ENCODE measurements at regions of chr5 and their contacts with region 1.

Region 1: GRCh38 chr5:41903892-41904799 is at the start of gene RIMOC1:
- DNase-seq: peak; percentile 94 to 98 (median 97)
- ATAC-seq: peak; percentile 94
- H3K4me3 ChIP-seq: peak within 1 kb of the TSS; percentile 90
- H3K4me3 Mint-ChIP-seq: peak within 1 kb of the TSS; percentile 84 to 99 (median 98)
- H3K27ac ChIP-seq: peak within 1 kb of the TSS; percentile 85
- H3K27ac Mint-ChIP-seq: peak within 1 kb of the TSS; percentile 97 to 100 (median 99)
- H3K4me1 ChIP-seq: peaks cover 16 to 18% of the 10 kb centered on the region in 2 donors
- H3K4me1 Mint-ChIP-seq: peaks cover 21 to 54% (median 46%) of the 10 kb centered on the region in 7 donors
- H3K27me3 ChIP-seq: no peaks in the 10 kb centered on the region
- H3K27me3 Mint-ChIP-seq: peaks cover 0 to 11% (median 0%) of the 10 kb centered on the region in 5 donors
- total RNA-seq, gene RIMOC1: 13.8 to 40.6 (median 27.5) TPM

Region 2: GRCh38 chr5:40755407-40756365 is 1148.5 kb before region 1 on chr5 and contains the start of gene TTC33:
- CTCF ChIA-PET with region 1: no interaction called
- POLR2A ChIA-PET with region 1: no interaction called
- intact Hi-C with region 1: loop called in 1 of 2 experiments (anchors 1 kb)
- DNase-seq: peak; percentile 84 to 95 (median 91)
- ATAC-seq: peak; percentile 95
- H3K4me3 ChIP-seq: peak within 1 kb of the TSS; percentile 95
- H3K4me3 Mint-ChIP-seq: no peak within 1 kb of the TSS
- H3K27ac ChIP-seq: peak within 1 kb of the TSS; percentile 89
- H3K27ac Mint-ChIP-seq: peak within 1 kb of the TSS in 1 of 9 donors; percentile 32
- H3K4me1 ChIP-seq: peaks cover 9 to 11% of the 10 kb centered on the region in 2 donors
- H3K4me1 Mint-ChIP-seq: peaks cover 0 to 34% (median 17%) of the 10 kb centered on the region in 7 donors
- H3K27me3 ChIP-seq: no peaks in the 10 kb centered on the region
- H3K27me3 Mint-ChIP-seq: no peaks in the 10 kb centered on the region
- total RNA-seq, gene TTC33: 7.0 to 17.2 (median 14.0) TPM

Region 3: DNA sequence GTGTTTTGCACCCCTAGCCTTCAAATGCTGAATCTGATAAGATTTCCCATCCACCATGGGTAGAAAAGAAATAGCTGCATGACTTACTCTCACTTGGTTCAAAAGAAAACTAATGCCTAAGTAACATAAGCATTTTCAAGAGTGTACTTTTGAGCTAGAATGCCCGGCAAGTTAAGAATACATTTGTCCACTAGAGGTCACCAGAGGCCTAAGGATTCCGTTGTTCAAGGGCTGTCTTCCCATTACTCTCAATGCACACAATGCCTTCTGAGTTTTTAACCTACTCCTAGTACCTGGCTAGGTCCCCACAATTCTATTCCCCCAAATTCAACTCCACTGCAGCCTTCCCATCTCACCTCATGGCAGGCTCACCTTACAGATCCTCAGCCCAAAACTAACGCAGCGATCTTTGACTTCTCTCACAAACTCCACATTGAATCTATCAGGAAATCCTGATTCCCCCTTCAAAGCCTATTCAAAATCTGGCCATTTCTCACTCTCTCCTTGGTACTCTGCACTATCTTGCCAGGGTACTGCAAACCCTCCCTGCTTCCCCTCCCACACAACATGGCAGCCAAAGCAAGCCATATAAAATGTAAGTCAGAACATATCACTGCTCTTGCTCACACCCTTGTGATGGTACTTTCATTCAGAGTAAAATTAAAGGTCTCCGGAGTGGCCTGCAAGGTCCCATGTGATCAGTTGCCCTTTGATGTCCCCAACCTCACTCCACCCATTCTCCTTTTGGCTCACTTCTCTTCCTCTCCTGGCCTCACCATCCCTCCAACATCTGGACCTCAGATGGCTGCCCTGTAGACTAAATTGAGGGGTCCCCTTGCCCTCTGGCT is 47.3 kb before region 1 on chr5:
- CTCF ChIA-PET with region 1: interaction called, 3 read pairs
- POLR2A ChIA-PET with region 1: no interaction called
- intact Hi-C with region 1: loop called (anchors 1 kb)
- DNase-seq: peak in 8 of 9 donors; percentile 34 to 77 (median 71)
- ATAC-seq: peak; percentile 93
- H3K4me3 ChIP-seq: no peak overlapping the region
- H3K4me3 Mint-ChIP-seq: no peak overlapping the region
- H3K27ac ChIP-seq: peak overlapping the region; percentile 1
- H3K27ac Mint-ChIP-seq: no peak overlapping the region
- H3K4me1 ChIP-seq: no peaks in the 10 kb centered on the region
- H3K4me1 Mint-ChIP-seq: peaks cover under 1 to 13% (median 7%) of the 10 kb centered on the region in 7 donors
- H3K27me3 ChIP-seq: no peaks in the 10 kb centered on the region
- H3K27me3 Mint-ChIP-seq: no peaks in the 10 kb centered on the region

Region 4: DNA sequence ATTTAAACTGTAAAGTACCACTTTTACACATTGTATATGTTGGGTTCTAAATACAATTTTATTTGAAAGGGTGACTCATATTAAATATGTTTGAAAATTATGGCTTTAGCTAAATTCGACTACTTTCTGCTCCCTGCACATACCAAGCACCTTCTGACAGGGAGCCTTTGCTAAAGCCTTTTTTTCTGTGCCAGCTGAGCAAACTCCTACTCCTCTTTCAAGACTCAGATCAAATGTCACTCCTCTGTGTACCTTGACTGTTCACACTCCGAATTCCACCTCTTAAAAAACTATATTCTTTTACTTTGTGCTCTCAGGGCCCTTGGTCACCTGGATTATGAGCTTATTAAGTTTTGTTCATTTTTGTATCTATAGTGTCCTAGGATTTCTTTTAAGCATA is 27.5 kb before region 1 on chr5:
- CTCF ChIA-PET with region 1: interaction called, 5 read pairs
- POLR2A ChIA-PET with region 1: interaction called, 62 read pairs
- intact Hi-C with region 1: no loop called
- DNase-seq: no peak
- ATAC-seq: no peak
- H3K4me3 ChIP-seq: no peak overlapping the region
- H3K4me3 Mint-ChIP-seq: no peak overlapping the region
- H3K27ac ChIP-seq: no peak overlapping the region
- H3K27ac Mint-ChIP-seq: no peak overlapping the region
- H3K4me1 ChIP-seq: no peaks in the 10 kb centered on the region
- H3K4me1 Mint-ChIP-seq: peaks cover 0 to 15% (median 8%) of the 10 kb centered on the region in 7 donors
- H3K27me3 ChIP-seq: no peaks in the 10 kb centered on the region
- H3K27me3 Mint-ChIP-seq: peaks cover 3 to 16% (median 8%) of the 10 kb centered on the region in 5 donors

Region 5: GRCh38 chr5:42950440-42951292 is 1046.5 kb after region 1 on chr5:
- CTCF ChIA-PET with region 1: no interaction called
- POLR2A ChIA-PET with region 1: interaction called, 3 read pairs
- intact Hi-C with region 1: loop called (anchors 1 to 5 kb)
- DNase-seq: peak in 8 of 9 donors; percentile 39 to 77 (median 51)
- ATAC-seq: peak; percentile 51
- H3K4me3 ChIP-seq: peak overlapping the region; percentile 80
- H3K4me3 Mint-ChIP-seq: peak overlapping the region; percentile 87 to 99 (median 97)
- H3K27ac ChIP-seq: peak overlapping the region; percentile 98
- H3K27ac Mint-ChIP-seq: peak overlapping the region; percentile 97 to 100 (median 99)
- H3K4me1 ChIP-seq: peaks cover 5 to 22% of the 10 kb centered on the region in 2 donors
- H3K4me1 Mint-ChIP-seq: peaks cover 13 to 51% (median 23%) of the 10 kb centered on the region in 7 donors
- H3K27me3 ChIP-seq: no peaks in the 10 kb centered on the region
- H3K27me3 Mint-ChIP-seq: peaks cover 0 to 9% (median 0%) of the 10 kb centered on the region in 5 donors

Region 6: DNA sequence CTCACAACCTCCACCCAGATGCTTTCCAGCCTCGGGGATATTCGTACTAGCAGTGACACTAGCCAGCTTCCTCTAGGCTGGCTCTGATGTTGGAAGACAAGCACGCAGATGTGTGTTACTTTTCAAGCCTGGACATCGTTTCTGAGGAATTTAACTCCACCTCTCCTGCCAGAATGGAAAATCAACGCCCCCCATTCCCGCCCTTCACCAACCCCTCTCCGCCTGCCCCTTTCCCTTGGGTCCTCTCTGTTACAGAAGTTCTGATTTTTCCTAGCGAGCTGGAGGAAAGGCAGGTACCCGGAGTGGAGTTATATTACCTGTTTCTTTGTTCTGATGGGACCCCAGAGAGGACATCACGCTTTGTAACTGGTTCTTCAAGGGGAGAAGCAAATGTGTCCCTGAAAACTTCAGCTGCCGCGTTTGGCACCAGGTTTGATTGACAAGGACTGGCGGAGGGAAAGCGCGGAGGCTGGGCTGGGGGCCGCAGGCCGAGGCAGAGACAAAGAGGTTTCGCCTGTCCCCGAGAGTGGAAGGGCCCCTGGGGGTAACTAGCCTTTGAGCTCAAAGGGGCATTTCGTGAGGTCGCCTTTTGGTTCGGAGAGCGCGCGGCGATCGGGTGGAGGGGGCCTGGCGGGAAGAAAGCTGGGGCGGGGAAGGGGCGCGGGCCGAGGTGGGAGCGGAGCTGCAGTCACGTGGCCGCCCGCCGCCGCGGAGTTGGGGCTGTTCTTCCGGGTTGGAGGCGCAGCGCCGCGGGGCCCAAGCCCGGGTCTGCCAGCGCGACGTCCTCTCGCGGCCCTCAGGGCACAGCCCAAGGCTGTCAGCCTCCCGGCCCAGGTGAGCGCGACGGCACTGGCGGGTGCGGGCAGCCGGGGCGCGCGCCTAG is 1698.6 kb after region 1 on chr5 and contains the start of gene NNT:
- CTCF ChIA-PET with region 1: no interaction called
- POLR2A ChIA-PET with region 1: no interaction called
- intact Hi-C with region 1: loop called in 1 of 2 experiments (anchors 10 kb)
- DNase-seq: peak; percentile 71 to 85 (median 78)
- ATAC-seq: peak; percentile 85
- H3K4me3 ChIP-seq: peak within 1 kb of the TSS; percentile 78
- H3K4me3 Mint-ChIP-seq: peak within 1 kb of the TSS; percentile 90 to 99 (median 94)
- H3K27ac ChIP-seq: peak within 1 kb of the TSS; percentile 87
- H3K27ac Mint-ChIP-seq: peak within 1 kb of the TSS; percentile 86 to 98 (median 93)
- H3K4me1 ChIP-seq: peaks cover 6 to 14% of the 10 kb centered on the region in 2 donors
- H3K4me1 Mint-ChIP-seq: peaks cover 26 to 72% (median 60%) of the 10 kb centered on the region in 7 donors
- H3K27me3 ChIP-seq: no peaks in the 10 kb centered on the region
- H3K27me3 Mint-ChIP-seq: no peaks in the 10 kb centered on the region
- total RNA-seq, gene NNT: 42.5 to 73.5 (median 60.7) TPM

Measured in naive thymus-derived CD4-positive, alpha-beta T cell (primary cell).